Motor neuron (in vitro differentiated cells): ENCODE measurements at regions of chr11 and their contacts with region 1.

Region 1: GRCh38 chr11:19890308-19890707 is 177.7 kb downstream of the NAV2 start:
- ATAC-seq: peak in 4 of 8 experiments; percentile 23 to 74 (median 42)
- H3K4me3 ChIP-seq: no peak overlapping the region
- H3K27ac ChIP-seq: no peak overlapping the region
- H3K4me1 ChIP-seq: peaks cover 0 to 13% of the 10 kb centered on the region in 2 donors

Region 2: DNA sequence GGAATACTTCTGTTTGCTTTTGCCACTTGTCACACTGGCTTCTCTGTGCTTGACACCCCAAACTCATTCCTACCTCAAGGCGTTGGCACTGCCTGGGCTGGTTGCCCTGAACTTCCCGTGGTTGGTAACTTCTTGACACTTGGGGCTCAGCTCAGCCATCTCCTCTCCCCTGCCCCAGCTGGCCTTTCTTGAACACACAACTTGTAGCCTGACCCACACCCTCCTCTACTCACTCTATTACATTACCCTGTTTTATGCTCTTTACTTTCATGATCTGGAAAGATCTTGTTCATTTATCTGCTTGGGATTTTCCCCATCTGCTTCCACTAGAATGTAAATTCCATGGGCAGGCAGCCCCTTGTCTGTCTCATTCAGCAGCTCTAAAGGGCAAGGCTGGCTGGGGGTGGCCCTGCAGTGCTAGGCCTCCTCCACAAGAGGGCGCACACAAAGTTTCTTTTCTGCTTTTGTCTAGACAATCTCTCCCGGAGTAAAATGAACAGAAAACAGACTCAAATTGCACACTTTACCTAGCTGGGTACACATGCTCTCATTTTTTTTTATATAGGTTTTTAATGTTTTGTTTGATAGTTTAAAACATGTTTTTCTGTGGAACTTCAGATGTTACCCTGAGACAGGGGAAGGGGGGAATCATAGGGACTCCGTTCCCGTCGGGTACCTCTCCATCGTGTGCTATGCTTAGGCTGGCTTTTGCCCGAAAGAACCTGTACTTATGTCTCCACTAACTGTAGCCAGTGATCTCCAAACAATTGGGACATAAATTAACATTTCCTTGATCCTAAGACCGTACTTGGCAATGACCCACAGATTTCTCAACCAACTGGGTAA is 813.3 kb before region 1 on chr11:
- in situ Hi-C with region 1: loop called in 1 of 9 experiments (anchors 25 kb)
- ATAC-seq: peak; percentile 41 to 81 (median 57)
- H3K4me3 ChIP-seq: no peak overlapping the region
- H3K27ac ChIP-seq: no peak overlapping the region
- H3K4me1 ChIP-seq: peaks cover 0 to 6% of the 10 kb centered on the region in 2 donors

Region 3: DNA sequence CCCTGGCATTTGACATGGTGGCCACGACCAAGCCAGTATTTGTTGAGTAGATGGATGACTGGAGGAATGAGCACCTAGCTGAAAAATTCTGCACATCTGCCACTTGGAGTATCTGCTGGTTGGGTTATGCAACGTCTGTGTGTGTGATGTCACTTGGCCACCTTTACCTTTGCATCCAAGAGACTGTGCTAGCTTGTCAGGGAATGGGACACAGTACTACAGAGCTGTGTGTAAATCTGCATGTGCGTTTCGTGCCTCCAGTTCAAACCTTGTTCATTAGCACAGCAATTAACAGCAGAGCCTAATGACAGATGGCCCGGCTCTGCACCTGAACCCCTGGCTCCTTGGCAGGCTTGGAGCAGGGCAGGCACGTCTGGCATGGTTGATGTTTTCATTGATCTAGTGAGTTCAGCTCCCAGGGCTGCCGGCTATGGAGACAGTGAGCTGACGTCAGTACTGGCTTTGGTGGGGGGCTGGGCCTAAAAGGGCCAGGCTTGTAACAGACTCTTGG is 366.1 kb before region 1 on chr11:
- in situ Hi-C with region 1: no loop called
- ATAC-seq: peak in 6 of 8 experiments; percentile 30 to 97 (median 94)
- H3K4me3 ChIP-seq: no peak overlapping the region
- H3K27ac ChIP-seq: peak overlapping the region; percentile 52 to 62
- H3K4me1 ChIP-seq: peaks cover 55 to 58% of the 10 kb centered on the region in 2 donors

Region 4: GRCh38 chr11:20056109-20056949 is 166.0 kb after region 1 on chr11:
- in situ Hi-C with region 1: no loop called
- ATAC-seq: no peak
- H3K4me3 ChIP-seq: no peak overlapping the region
- H3K27ac ChIP-seq: no peak overlapping the region
- H3K4me1 ChIP-seq: peaks cover 0 to 9% of the 10 kb centered on the region in 2 donors